Sciatic nerve (tissue), 2 donors: ENCODE measurements at regions of chr6 and their contacts with region 1.

Region 1: GRCh38 chr6:47787620-47788497 is 6.0 kb downstream of the OPN5 start:
- DNase-seq: peak; percentile 65
- ATAC-seq: peak; percentile 80

Region 2: GRCh38 chr6:46053039-46053933 is 1734.6 kb before region 1 on chr6:
- intact Hi-C with region 1: loop called (anchors 5 kb)
- DNase-seq: no peak
- ATAC-seq: peak; percentile 63

Region 3: GRCh38 chr6:48765352-48765961 is 977.6 kb after region 1 on chr6:
- intact Hi-C with region 1: loop called (anchors 10 kb)
- DNase-seq: no peak
- ATAC-seq: peak; percentile 63